ENCODE measurements at regions of chr11 and their contacts with region 1.

Region 1: GRCh38 chr11:65497141-65498041 is 1.5 kb upstream of the MALAT1 start:
- DNase-seq: peak; percentile 93 to 99 (median 97)
- ATAC-seq: peak; percentile 78 to 87 (median 82)
- H3K4me3 ChIP-seq: peak overlapping the region; percentile 79 to 100
- H3K4me3 Mint-ChIP-seq: no peak overlapping the region
- H3K27ac ChIP-seq: peak overlapping the region; percentile 97
- H3K27ac Mint-ChIP-seq: no peak overlapping the region
- H3K4me1 ChIP-seq: peaks cover 11 to 26% of the 10 kb centered on the region in 2 experiments
- H3K4me1 Mint-ChIP-seq: peaks cover 22 to 29% (median 28%) of the 10 kb centered on the region in 3 donors
- H3K27me3 ChIP-seq: no peaks in the 10 kb centered on the region
- H3K27me3 Mint-ChIP-seq: no peaks in the 10 kb centered on the region

Region 2: GRCh38 chr11:65382033-65382807 is 115.2 kb before region 1 on chr11 and contains the start of gene SLC25A45:
- CTCF ChIA-PET with region 1: interaction called in 1 of 2 experiments, 3 read pairs
- POLR2A ChIA-PET with region 1: interaction called, 3 to 19 read pairs
- DNase-seq: peak; percentile 81 to 93 (median 85)
- ATAC-seq: peak; percentile 83 to 89 (median 85)
- H3K4me3 ChIP-seq: peak within 1 kb of the TSS; percentile 64 to 66
- H3K4me3 Mint-ChIP-seq: peak within 1 kb of the TSS; percentile 82 to 96 (median 84)
- H3K27ac ChIP-seq: peak within 1 kb of the TSS; percentile 95
- H3K27ac Mint-ChIP-seq: peak within 1 kb of the TSS; percentile 98 to 100
- H3K4me1 ChIP-seq: peaks cover 14 to 67% of the 10 kb centered on the region in 2 experiments
- H3K4me1 Mint-ChIP-seq: peaks cover 48 to 61% (median 57%) of the 10 kb centered on the region in 3 donors
- H3K27me3 ChIP-seq: no peaks in the 10 kb centered on the region
- H3K27me3 Mint-ChIP-seq: no peaks in the 10 kb centered on the region
- total RNA-seq, gene SLC25A45: 18.7 to 72.2 (median 22.6) TPM

Region 3: GRCh38 chr11:65418711-65419459 is 78.5 kb before region 1 on chr11:
- CTCF ChIA-PET with region 1: interaction called, 4 to 29 read pairs
- POLR2A ChIA-PET with region 1: interaction called, 98 to 306 read pairs
- DNase-seq: peak; percentile 50 to 84 (median 69)
- ATAC-seq: peak; percentile 3 to 33 (median 18)
- H3K4me3 ChIP-seq: peak overlapping the region; percentile 72 to 92
- H3K4me3 Mint-ChIP-seq: peak overlapping the region; percentile 91 to 100 (median 98)
- H3K27ac ChIP-seq: peak overlapping the region; percentile 95
- H3K27ac Mint-ChIP-seq: peak overlapping the region; percentile 98 to 99
- H3K4me1 ChIP-seq: peaks cover 50 to 79% of the 10 kb centered on the region in 2 experiments
- H3K4me1 Mint-ChIP-seq: peaks cover 53 to 77% (median 62%) of the 10 kb centered on the region in 3 donors
- H3K27me3 ChIP-seq: no peaks in the 10 kb centered on the region
- H3K27me3 Mint-ChIP-seq: no peaks in the 10 kb centered on the region

Region 4: GRCh38 chr11:65425105-65425970 is 72.1 kb before region 1 on chr11:
- CTCF ChIA-PET with region 1: interaction called in 1 of 2 experiments, 22 read pairs
- POLR2A ChIA-PET with region 1: interaction called, 98 to 306 read pairs
- DNase-seq: peak; percentile 55 to 96 (median 87)
- ATAC-seq: peak; percentile 46 to 63 (median 50)
- H3K4me3 ChIP-seq: peak overlapping the region; percentile 92 to 95
- H3K4me3 Mint-ChIP-seq: peak overlapping the region; percentile 91 to 100 (median 98)
- H3K27ac ChIP-seq: peak overlapping the region; percentile 95
- H3K27ac Mint-ChIP-seq: peak overlapping the region; percentile 98 to 99
- H3K4me1 ChIP-seq: peaks cover 69 to 76% of the 10 kb centered on the region in 2 experiments
- H3K4me1 Mint-ChIP-seq: peaks cover 52 to 90% (median 53%) of the 10 kb centered on the region in 3 donors
- H3K27me3 ChIP-seq: no peaks in the 10 kb centered on the region
- H3K27me3 Mint-ChIP-seq: no peaks in the 10 kb centered on the region

Region 5: GRCh38 chr11:65471410-65471762 is 26.0 kb before region 1 on chr11:
- CTCF ChIA-PET with region 1: interaction called, 6 to 21 read pairs
- POLR2A ChIA-PET with region 1: interaction called, 47 to 69 read pairs
- DNase-seq: peak in 3 of 35 experiments; percentile 6 to 40 (median 23)
- ATAC-seq: peak in 1 of 4 experiments; percentile 11
- H3K4me3 ChIP-seq: peak overlapping the region in 1 of 2 donors; percentile 34
- H3K4me3 Mint-ChIP-seq: peak overlapping the region in 2 of 3 donors; percentile 70 to 72
- H3K27ac ChIP-seq: peak overlapping the region; percentile 95
- H3K27ac Mint-ChIP-seq: peak overlapping the region; percentile 94 to 98
- H3K4me1 ChIP-seq: peaks cover 3 to 26% of the 10 kb centered on the region in 2 experiments
- H3K4me1 Mint-ChIP-seq: peaks cover 16 to 36% (median 31%) of the 10 kb centered on the region in 3 donors
- H3K27me3 ChIP-seq: no peaks in the 10 kb centered on the region
- H3K27me3 Mint-ChIP-seq: no peaks in the 10 kb centered on the region

Region 6: GRCh38 chr11:65477149-65477965 is 20.0 kb before region 1 on chr11:
- CTCF ChIA-PET with region 1: interaction called, 9 to 21 read pairs
- POLR2A ChIA-PET with region 1: interaction called, 47 to 69 read pairs
- DNase-seq: peak; percentile 53 to 91 (median 76)
- ATAC-seq: peak; percentile 87 to 89 (median 88)
- H3K4me3 ChIP-seq: peak overlapping the region; percentile 68 to 98
- H3K4me3 Mint-ChIP-seq: peak overlapping the region; percentile 93 to 100 (median 94)
- H3K27ac ChIP-seq: peak overlapping the region; percentile 99
- H3K27ac Mint-ChIP-seq: peak overlapping the region; percentile 98 to 100
- H3K4me1 ChIP-seq: peaks cover 3 to 29% of the 10 kb centered on the region in 2 experiments
- H3K4me1 Mint-ChIP-seq: peaks cover 15 to 31% (median 18%) of the 10 kb centered on the region in 3 donors
- H3K27me3 ChIP-seq: no peaks in the 10 kb centered on the region
- H3K27me3 Mint-ChIP-seq: no peaks in the 10 kb centered on the region

Region 7: DNA sequence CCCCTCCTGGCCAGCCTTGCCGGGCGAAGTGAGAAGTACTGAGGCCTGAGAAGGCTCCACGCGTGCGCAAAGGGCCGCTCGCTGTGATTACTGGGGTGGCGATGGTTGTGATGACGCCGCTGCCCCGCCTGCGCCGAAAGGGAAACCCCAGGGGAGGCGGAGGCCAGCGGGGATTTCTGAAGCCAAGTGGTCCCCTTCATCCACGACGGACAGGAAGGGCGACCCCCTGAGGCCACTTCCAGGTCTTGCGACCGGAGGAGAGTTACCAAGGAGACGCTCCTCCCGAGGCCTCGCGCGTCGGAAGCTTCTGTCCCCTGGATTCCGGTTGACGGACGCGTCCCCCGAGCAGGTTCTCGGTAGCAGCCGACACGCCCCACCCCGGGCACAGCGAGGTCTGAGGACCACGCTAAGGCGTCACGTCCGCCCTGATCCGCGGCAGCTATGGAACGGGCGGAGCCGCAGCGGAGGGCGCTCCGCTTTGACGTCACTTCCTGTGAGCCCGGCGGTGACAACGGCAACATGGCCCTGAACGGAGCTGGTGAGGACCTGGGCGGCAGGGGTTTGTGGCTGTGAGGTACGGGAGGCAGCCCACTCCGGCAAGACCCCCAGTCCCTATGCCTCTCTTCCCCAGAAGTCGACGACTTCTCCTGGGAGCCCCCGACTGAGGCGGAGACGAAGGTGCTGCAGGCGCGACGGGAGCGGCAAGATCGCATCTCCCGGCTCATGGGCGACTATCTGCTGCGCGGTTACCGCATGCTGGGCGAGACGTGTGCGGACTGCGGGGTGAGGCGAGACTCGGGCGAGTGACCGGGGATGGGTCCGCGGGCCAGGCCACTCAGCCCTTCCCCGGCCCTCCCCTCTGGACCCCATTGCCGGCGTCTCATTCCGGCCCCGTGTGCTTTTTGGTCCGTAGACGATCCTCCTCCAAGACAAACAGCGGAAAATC is 72.9 kb after region 1 on chr11 and contains the start of gene ZNRD2:
- CTCF ChIA-PET with region 1: no interaction called
- POLR2A ChIA-PET with region 1: interaction called, 4 to 10 read pairs
- DNase-seq: peak; percentile 95 to 99 (median 98)
- ATAC-seq: peak; percentile 73 to 78 (median 76)
- H3K4me3 ChIP-seq: peak within 1 kb of the TSS; percentile 76 to 83
- H3K4me3 Mint-ChIP-seq: peak within 1 kb of the TSS; percentile 98 to 99 (median 98)
- H3K27ac ChIP-seq: peak within 1 kb of the TSS; percentile 100
- H3K27ac Mint-ChIP-seq: peak within 1 kb of the TSS; percentile 98
- H3K4me1 ChIP-seq: peaks cover 38 to 86% of the 10 kb centered on the region in 2 experiments
- H3K4me1 Mint-ChIP-seq: peaks cover 74 to 87% (median 79%) of the 10 kb centered on the region in 3 donors
- H3K27me3 ChIP-seq: no peaks in the 10 kb centered on the region
- H3K27me3 Mint-ChIP-seq: no peaks in the 10 kb centered on the region
- total RNA-seq, gene ZNRD2: 32.5 to 36.9 (median 34.5) TPM

Region 8: GRCh38 chr11:66126808-66127555 is 629.6 kb after region 1 on chr11:
- CTCF ChIA-PET with region 1: no interaction called
- POLR2A ChIA-PET with region 1: no interaction called
- DNase-seq: peak; percentile 25 to 75 (median 59)
- ATAC-seq: peak; percentile 93 to 97 (median 96)
- H3K4me3 ChIP-seq: peak overlapping the region in 1 of 2 donors; percentile 23
- H3K4me3 Mint-ChIP-seq: peak overlapping the region; percentile 64 to 77 (median 72)
- H3K27ac ChIP-seq: peak overlapping the region; percentile 71
- H3K27ac Mint-ChIP-seq: peak overlapping the region; percentile 98
- H3K4me1 ChIP-seq: peaks cover 36 to 37% of the 10 kb centered on the region in 2 experiments
- H3K4me1 Mint-ChIP-seq: peaks cover 76 to 84% (median 82%) of the 10 kb centered on the region in 3 donors
- H3K27me3 ChIP-seq: no peaks in the 10 kb centered on the region
- H3K27me3 Mint-ChIP-seq: no peaks in the 10 kb centered on the region

Measured in T-cell (primary cell).